PC-3 (cell line): ENCODE measurements at regions of chr3 and their contacts with region 1.

Region 1: GRCh38 chr3:112136959-112137693 is 4.1 kb upstream of the GCSAM start:
- DNase-seq: peak; percentile 81
- ATAC-seq: peak; percentile 83
- H3K4me3 ChIP-seq: no peak overlapping the region
- H3K27ac ChIP-seq: no peak overlapping the region
- H3K4me1 ChIP-seq: peaks cover 11% of the 10 kb centered on the region
- H3K27me3 ChIP-seq: no peaks in the 10 kb centered on the region
- CTCF ChIP-seq: peak; percentile 88

Region 2: DNA sequence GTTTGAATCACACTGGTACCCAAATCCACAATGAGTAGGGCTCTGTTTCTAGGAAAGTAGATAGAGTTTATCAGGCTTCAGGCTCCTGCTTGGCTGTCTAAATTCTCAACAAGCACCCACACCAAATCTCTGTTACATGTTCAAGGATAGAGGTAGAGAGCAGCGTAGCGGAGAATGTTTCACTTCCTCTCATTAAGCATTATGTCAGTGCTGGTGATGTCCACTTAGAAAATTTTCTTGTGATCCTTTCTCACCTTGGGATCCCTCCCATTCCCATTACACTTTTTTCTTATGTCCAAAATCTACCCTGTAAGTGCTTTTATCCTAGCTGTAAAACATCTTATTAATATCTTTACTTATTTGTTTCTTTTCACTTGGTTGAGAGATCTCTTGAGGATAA is 30.6 kb after region 1 on chr3:
- CTCF ChIA-PET with region 1: no interaction called
- POLR2A ChIA-PET with region 1: no interaction called
- intact Hi-C with region 1: loop called (anchors 2 kb)
- DNase-seq: no peak
- ATAC-seq: no peak
- H3K4me3 ChIP-seq: no peak overlapping the region
- H3K27ac ChIP-seq: no peak overlapping the region
- H3K4me1 ChIP-seq: no peaks in the 10 kb centered on the region
- H3K27me3 ChIP-seq: no peaks in the 10 kb centered on the region
- CTCF ChIP-seq: no peak

Region 3: GRCh38 chr3:112187300-112187699 is 50.2 kb after region 1 on chr3:
- CTCF ChIA-PET with region 1: no interaction called
- POLR2A ChIA-PET with region 1: no interaction called
- intact Hi-C with region 1: no loop called
- DNase-seq: no peak
- ATAC-seq: no peak
- H3K4me3 ChIP-seq: no peak overlapping the region
- H3K27ac ChIP-seq: no peak overlapping the region
- H3K4me1 ChIP-seq: no peaks in the 10 kb centered on the region
- H3K27me3 ChIP-seq: no peaks in the 10 kb centered on the region
- CTCF ChIP-seq: no peak

Region 4: GRCh38 chr3:112327371-112327951 is 190.3 kb after region 1 on chr3:
- CTCF ChIA-PET with region 1: no interaction called
- POLR2A ChIA-PET with region 1: no interaction called
- intact Hi-C with region 1: loop called (anchors 2 kb)
- DNase-seq: peak; percentile 69
- ATAC-seq: peak; percentile 98
- H3K4me3 ChIP-seq: no peak overlapping the region
- H3K27ac ChIP-seq: no peak overlapping the region
- H3K4me1 ChIP-seq: no peaks in the 10 kb centered on the region
- H3K27me3 ChIP-seq: peaks cover 34% of the 10 kb centered on the region
- CTCF ChIP-seq: peak; percentile 88

Region 5: DNA sequence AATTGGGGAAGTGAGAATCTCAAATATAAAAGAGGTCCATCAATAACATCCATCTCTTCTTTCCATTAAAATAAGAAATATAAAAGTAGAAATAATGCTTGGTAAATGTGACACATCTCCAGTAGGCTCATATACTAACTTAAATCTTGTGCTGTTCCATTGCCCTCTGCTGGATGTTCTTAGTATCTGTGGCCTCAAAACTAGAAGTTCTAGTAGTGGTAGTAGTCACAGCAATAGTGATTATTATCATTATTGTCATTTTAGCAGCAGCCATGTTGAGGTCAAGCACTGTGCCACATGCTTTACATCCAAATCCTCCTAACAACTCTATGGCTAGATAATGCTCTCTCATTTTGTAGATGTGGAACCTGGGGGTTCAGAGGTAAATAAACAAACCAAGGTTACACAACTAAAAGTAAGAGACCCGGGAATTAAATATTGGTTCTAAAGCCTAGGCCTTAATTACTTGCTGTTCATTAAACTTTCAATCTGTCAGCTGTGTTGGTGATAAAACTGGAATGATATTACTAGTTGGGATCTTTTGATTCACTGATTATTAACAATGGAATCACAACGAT is 382.4 kb after region 1 on chr3:
- CTCF ChIA-PET with region 1: no interaction called
- POLR2A ChIA-PET with region 1: no interaction called
- intact Hi-C with region 1: loop called (anchors 1 kb)
- DNase-seq: peak; percentile 82
- ATAC-seq: peak; percentile 99
- H3K4me3 ChIP-seq: no peak overlapping the region
- H3K27ac ChIP-seq: no peak overlapping the region
- H3K4me1 ChIP-seq: no peaks in the 10 kb centered on the region
- H3K27me3 ChIP-seq: no peaks in the 10 kb centered on the region
- CTCF ChIP-seq: peak; percentile 84

Region 6: GRCh38 chr3:112681822-112682325 is 544.7 kb after region 1 on chr3:
- CTCF ChIA-PET with region 1: no interaction called
- POLR2A ChIA-PET with region 1: no interaction called
- intact Hi-C with region 1: no loop called
- DNase-seq: peak; percentile 65
- ATAC-seq: peak; percentile 40
- H3K4me3 ChIP-seq: no peak overlapping the region
- H3K27ac ChIP-seq: peak overlapping the region; percentile 88
- H3K4me1 ChIP-seq: peaks cover 73% of the 10 kb centered on the region
- H3K27me3 ChIP-seq: no peaks in the 10 kb centered on the region
- CTCF ChIP-seq: no peak